ENCODE measurements at regions of chr14 and their contacts with region 1.

Region 1: GRCh38 chr14:51651388-51652167 is at the start of gene FRMD6:
- DNase-seq: peak; percentile 90
- ATAC-seq: peak; percentile 86
- H3K4me3 Mint-ChIP-seq: peak within 1 kb of the TSS; percentile 80
- H3K27ac Mint-ChIP-seq: peak within 1 kb of the TSS; percentile 79
- H3K4me1 Mint-ChIP-seq: peaks cover 19% of the 10 kb centered on the region
- H3K27me3 Mint-ChIP-seq: peaks cover 12% of the 10 kb centered on the region
- total RNA-seq, gene FRMD6: 7.5 to 8.0 TPM

Region 2: GRCh38 chr14:50830932-50831725 is 820.4 kb before region 1 on chr14 and contains the start of gene NIN:
- CTCF ChIA-PET with region 1: no interaction called
- POLR2A ChIA-PET with region 1: no interaction called
- intact Hi-C with region 1: loop called in 1 of 2 experiments (anchors 5 kb)
- DNase-seq: peak; percentile 84
- ATAC-seq: peak; percentile 89
- H3K4me3 Mint-ChIP-seq: peak within 1 kb of the TSS; percentile 91
- H3K27ac Mint-ChIP-seq: peak within 1 kb of the TSS; percentile 88
- H3K4me1 Mint-ChIP-seq: peaks cover 56% of the 10 kb centered on the region
- H3K27me3 Mint-ChIP-seq: peaks cover 6% of the 10 kb centered on the region
- total RNA-seq, gene NIN: 47.5 to 53.8 TPM

Region 3: GRCh38 chr14:51239813-51240803 is 411.5 kb before region 1 on chr14 and contains the start of gene TMX1:
- CTCF ChIA-PET with region 1: no interaction called
- POLR2A ChIA-PET with region 1: no interaction called
- intact Hi-C with region 1: loop called (anchors 1 to 10 kb)
- DNase-seq: peak; percentile 94
- ATAC-seq: peak; percentile 93
- H3K4me3 Mint-ChIP-seq: no peak within 1 kb of the TSS
- H3K27ac Mint-ChIP-seq: no peak within 1 kb of the TSS
- H3K4me1 Mint-ChIP-seq: peaks cover 15% of the 10 kb centered on the region
- H3K27me3 Mint-ChIP-seq: no peaks in the 10 kb centered on the region
- total RNA-seq, gene TMX1: 38.8 to 55.9 TPM

Region 4: DNA sequence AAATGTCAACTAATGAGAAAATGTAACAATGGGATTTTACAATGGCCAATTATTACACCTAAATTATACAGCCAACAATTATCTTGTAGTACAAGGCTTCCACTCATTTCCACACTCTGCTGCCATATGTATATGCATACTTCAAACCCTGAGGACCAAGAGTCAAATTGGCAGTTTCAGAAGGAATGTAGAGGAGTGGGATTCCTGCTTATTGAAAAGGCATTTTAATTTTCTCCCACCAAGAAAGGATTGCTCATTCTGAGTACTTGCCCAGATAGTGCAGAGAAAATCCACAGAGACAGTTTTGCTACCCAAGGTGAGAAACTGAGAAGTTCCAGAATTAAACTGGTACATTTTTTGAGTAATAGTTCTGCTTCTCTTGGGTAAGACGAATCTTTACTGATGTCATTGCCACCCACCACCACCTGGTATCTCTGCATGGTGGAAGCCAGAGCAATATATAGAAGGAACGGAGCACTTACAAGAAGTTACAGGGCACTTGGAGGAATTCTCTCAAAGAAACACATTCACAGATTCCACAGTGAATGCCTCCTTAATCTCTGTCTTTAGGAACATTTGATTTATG is 20.7 kb before region 1 on chr14:
- CTCF ChIA-PET with region 1: no interaction called
- POLR2A ChIA-PET with region 1: no interaction called
- intact Hi-C with region 1: no loop called
- DNase-seq: peak; percentile 44
- ATAC-seq: peak; percentile 82
- H3K4me3 Mint-ChIP-seq: no peak overlapping the region
- H3K27ac Mint-ChIP-seq: no peak overlapping the region
- H3K4me1 Mint-ChIP-seq: peaks cover 15% of the 10 kb centered on the region
- H3K27me3 Mint-ChIP-seq: peaks cover 7% of the 10 kb centered on the region

Region 5: GRCh38 chr14:51677266-51677665 is 25.7 kb after region 1 on chr14:
- CTCF ChIA-PET with region 1: interaction called, 16 read pairs
- POLR2A ChIA-PET with region 1: no interaction called
- intact Hi-C with region 1: loop called (anchors 1 to 2 kb)
- DNase-seq: no peak
- ATAC-seq: no peak
- H3K4me3 Mint-ChIP-seq: no peak overlapping the region
- H3K27ac Mint-ChIP-seq: no peak overlapping the region
- H3K4me1 Mint-ChIP-seq: peaks cover 18% of the 10 kb centered on the region
- H3K27me3 Mint-ChIP-seq: peaks cover 7% of the 10 kb centered on the region

Region 6: GRCh38 chr14:51865953-51866747 is 214.6 kb after region 1 on chr14:
- CTCF ChIA-PET with region 1: no interaction called
- POLR2A ChIA-PET with region 1: no interaction called
- intact Hi-C with region 1: loop called in 1 of 2 experiments (anchors 5 kb)
- DNase-seq: no peak
- ATAC-seq: peak; percentile 51
- H3K4me3 Mint-ChIP-seq: no peak overlapping the region
- H3K27ac Mint-ChIP-seq: no peak overlapping the region
- H3K4me1 Mint-ChIP-seq: peaks cover 20% of the 10 kb centered on the region
- H3K27me3 Mint-ChIP-seq: no peaks in the 10 kb centered on the region

Region 7: DNA sequence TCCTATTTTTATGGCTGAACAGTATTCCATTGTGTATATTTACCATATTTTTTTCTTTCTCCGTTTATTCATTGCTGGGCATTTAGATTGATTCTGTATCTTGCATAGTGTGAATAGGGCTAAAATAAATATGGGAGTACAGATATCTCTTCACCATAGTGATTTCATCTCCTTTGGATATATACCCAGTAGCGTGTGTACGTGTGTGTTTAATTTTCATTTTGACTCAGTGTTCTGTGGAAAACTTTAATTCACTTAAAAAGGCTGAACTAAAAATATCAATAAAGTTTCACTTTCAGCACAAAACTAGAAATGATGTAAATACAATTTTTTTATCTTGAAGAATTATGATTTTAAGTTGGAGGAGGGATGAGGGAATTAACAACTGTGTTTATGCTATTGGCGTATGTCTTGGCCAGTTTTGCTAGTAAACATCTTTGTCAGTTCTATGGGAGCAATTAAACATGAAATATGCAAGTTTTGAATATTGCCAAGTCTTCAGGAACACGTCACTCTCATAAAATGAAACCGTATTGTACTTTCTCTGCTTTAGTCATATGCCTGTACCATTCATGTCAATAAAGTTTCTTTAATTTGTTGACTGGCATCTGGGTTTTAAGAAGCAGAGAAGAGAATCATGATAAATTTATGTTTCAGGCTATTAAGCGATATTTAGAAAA is 762.3 kb after region 1 on chr14:
- CTCF ChIA-PET with region 1: no interaction called
- POLR2A ChIA-PET with region 1: no interaction called
- intact Hi-C with region 1: loop called in 1 of 2 experiments (anchors 10 kb)
- DNase-seq: no peak
- ATAC-seq: peak; percentile 93
- H3K4me3 Mint-ChIP-seq: peak overlapping the region; percentile 47
- H3K27ac Mint-ChIP-seq: peak overlapping the region; percentile 92
- H3K4me1 Mint-ChIP-seq: peaks cover 32% of the 10 kb centered on the region
- H3K27me3 Mint-ChIP-seq: peaks cover 3% of the 10 kb centered on the region